IMR-90 (cell line): ENCODE measurements at regions of chr18 and their contacts with region 1.

Region 1: GRCh38 chr18:616380-616995 is 19.7 kb downstream of the CLUL1 start:
- DNase-seq: peak; percentile 58
- ATAC-seq: peak; percentile 64; the same call in 1 of the 2 replicates
- H3K4me3 ChIP-seq: no peak overlapping the region
- H3K27ac ChIP-seq: no peak overlapping the region
- H3K4me1 ChIP-seq: no peaks in the 10 kb centered on the region
- H3K27me3 ChIP-seq: peaks cover 29% of the 10 kb centered on the region
- CTCF ChIP-seq: peak; percentile 85
- POLR2A ChIP-seq: no peak
- RAD21 ChIP-seq: peak; percentile 91

Region 2: DNA sequence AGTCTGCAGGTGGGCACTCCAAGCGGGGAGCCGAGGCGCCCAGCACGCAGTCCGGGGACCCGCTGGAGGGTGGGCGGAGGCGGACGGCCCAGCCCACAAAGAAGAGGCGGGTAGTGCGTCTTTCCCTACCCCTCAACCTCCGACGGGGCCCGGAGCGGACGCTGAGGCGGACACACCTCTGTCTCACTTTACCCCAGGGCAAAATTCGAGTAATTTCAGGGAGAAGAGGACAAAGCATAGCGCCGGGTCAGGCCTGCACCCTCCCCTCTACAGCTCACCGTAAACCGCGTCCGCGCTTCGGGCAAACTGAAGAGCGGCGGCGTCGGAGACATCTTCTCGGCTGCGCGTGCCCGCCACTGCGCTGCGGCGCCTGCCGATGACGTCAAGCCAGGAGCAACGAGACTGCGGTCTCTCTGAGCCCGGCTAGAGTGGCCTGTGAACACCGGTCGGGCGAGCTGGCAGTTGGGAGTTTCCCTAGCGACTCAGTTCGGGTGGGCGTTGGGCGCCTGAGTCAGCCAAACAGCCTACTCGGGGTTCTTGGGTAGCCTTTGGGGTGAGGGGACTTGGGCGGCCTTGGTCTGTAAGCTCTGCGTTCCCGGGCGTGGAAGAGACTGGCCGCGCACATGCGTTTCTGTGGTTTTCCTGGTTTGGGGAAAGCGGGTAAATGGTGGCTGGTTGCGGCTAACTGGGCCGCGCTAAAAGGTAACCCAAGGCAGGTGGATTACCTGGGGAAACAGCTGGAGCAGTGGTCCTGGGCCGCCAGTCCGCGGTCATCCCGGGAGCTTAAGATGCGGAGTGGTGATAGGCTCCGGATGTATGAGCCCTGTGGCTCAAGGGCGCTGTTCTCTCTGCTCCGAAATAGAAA is 348.6 kb before region 1 on chr18 and contains the start of gene THOC1:
- CTCF ChIA-PET with region 1: no interaction called
- POLR2A ChIA-PET with region 1: no interaction called
- dilution Hi-C with region 1: no loop called
- in situ Hi-C with region 1: no loop called
- intact Hi-C with region 1: loop called (anchors 5 kb)
- DNase-seq: peak; percentile 94
- ATAC-seq: peak; percentile 95
- H3K4me3 ChIP-seq: peak within 1 kb of the TSS; percentile 92
- H3K27ac ChIP-seq: peak within 1 kb of the TSS; percentile 80
- H3K4me1 ChIP-seq: peaks cover 4% of the 10 kb centered on the region
- H3K27me3 ChIP-seq: no peaks in the 10 kb centered on the region
- CTCF ChIP-seq: no peak
- POLR2A ChIP-seq: peak; percentile 88; the same call in 1 of the 2 replicates
- RAD21 ChIP-seq: peak; percentile 15; the same call in 1 of the 2 replicates
- total RNA-seq, gene THOC1: 13.3 and 27.2 TPM in 2 replicates

Region 3: GRCh38 chr18:323253-323622 is 293.2 kb before region 1 on chr18:
- CTCF ChIA-PET with region 1: no interaction called
- POLR2A ChIA-PET with region 1: no interaction called
- dilution Hi-C with region 1: no loop called
- in situ Hi-C with region 1: no loop called
- intact Hi-C with region 1: loop called (anchors 1 kb)
- DNase-seq: peak; percentile 38
- ATAC-seq: no peak
- H3K4me3 ChIP-seq: no peak overlapping the region
- H3K27ac ChIP-seq: no peak overlapping the region
- H3K4me1 ChIP-seq: peaks cover 1% of the 10 kb centered on the region; the same call in 1 of the 2 replicates
- H3K27me3 ChIP-seq: peaks cover 50% of the 10 kb centered on the region
- CTCF ChIP-seq: no peak
- POLR2A ChIP-seq: no peak
- RAD21 ChIP-seq: no peak

Region 4: DNA sequence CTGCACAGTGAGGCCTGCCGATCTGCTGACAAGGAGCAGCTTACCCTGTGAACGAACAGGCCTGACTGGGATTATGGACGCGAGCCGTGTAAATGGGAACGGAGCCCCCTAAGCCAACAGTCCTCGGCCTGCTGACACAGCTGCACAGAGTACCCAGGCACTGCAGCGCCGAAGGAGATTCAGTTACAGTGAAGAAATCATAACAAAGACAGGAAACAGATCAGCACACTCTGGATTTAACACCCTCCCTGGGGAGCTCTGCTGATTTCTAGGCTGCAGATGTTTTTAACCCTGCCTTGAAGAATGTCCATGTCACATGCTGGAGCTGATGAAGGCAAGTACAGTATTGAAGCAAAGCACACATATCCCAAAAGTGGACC is 159.4 kb before region 1 on chr18:
- CTCF ChIA-PET with region 1: no interaction called
- POLR2A ChIA-PET with region 1: no interaction called
- dilution Hi-C with region 1: no loop called
- in situ Hi-C with region 1: no loop called
- intact Hi-C with region 1: loop called (anchors 5 kb)
- DNase-seq: peak; percentile 70
- ATAC-seq: peak; percentile 90
- H3K4me3 ChIP-seq: no peak overlapping the region
- H3K27ac ChIP-seq: peak overlapping the region; percentile 83
- H3K4me1 ChIP-seq: peaks cover 15% of the 10 kb centered on the region
- H3K27me3 ChIP-seq: peaks cover 11% of the 10 kb centered on the region
- CTCF ChIP-seq: no peak
- POLR2A ChIP-seq: no peak
- RAD21 ChIP-seq: no peak

Region 5: DNA sequence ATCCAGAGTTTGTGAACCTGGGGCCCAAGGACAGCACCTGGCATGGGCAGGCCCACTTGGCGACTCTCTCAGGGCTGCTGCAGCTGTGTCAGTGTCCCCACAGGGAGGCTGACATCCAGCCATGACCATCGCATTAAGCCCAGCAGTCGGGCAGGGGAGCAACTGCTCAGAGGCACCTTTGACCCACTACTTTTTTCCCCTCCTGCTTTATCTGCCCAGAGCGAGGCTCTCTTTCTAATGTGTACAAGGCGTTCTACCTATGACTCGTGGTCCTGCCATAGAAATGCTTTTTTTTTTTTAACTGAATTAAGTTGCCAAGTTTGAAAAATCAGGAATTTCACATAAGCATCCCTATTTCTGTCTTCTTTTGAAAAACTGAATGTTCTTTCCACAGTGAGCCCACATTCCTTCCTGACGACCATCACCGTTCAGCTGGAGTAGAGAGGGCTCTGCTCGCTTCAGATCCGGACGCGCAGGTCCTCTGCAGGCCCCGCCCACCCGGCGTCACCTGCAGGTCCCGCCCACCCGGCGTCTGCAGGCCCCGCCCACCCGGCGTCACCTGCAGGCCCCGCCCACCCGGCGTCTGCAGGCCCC is 20.1 kb before region 1 on chr18:
- CTCF ChIA-PET with region 1: interaction called, 3 read pairs
- POLR2A ChIA-PET with region 1: no interaction called
- dilution Hi-C with region 1: no loop called
- in situ Hi-C with region 1: no loop called
- intact Hi-C with region 1: loop called (anchors 1 kb)
- DNase-seq: no peak
- ATAC-seq: no peak
- H3K4me3 ChIP-seq: no peak overlapping the region
- H3K27ac ChIP-seq: no peak overlapping the region
- H3K4me1 ChIP-seq: no peaks in the 10 kb centered on the region
- H3K27me3 ChIP-seq: peaks cover 18% of the 10 kb centered on the region
- CTCF ChIP-seq: no peak
- POLR2A ChIP-seq: no peak
- RAD21 ChIP-seq: no peak

Region 6: GRCh38 chr18:634551-635045 is 18.1 kb after region 1 on chr18:
- CTCF ChIA-PET with region 1: no interaction called
- POLR2A ChIA-PET with region 1: no interaction called
- dilution Hi-C with region 1: no loop called
- in situ Hi-C with region 1: no loop called
- intact Hi-C with region 1: no loop called
- DNase-seq: no peak
- ATAC-seq: 0 out of 2 replicates have a peak, but pooled peaks have one; percentile 17
- H3K4me3 ChIP-seq: no peak overlapping the region
- H3K27ac ChIP-seq: no peak overlapping the region
- H3K4me1 ChIP-seq: no peaks in the 10 kb centered on the region
- H3K27me3 ChIP-seq: peaks cover 3% of the 10 kb centered on the region; the same call in 1 of the 2 replicates
- CTCF ChIP-seq: no peak
- POLR2A ChIP-seq: no peak
- RAD21 ChIP-seq: no peak